Caco-2 (cell line): ENCODE measurements at regions of chr16 and their contacts with region 1.

Region 1: GRCh38 chr16:180938-181667 is 844 bp downstream of the HBQ1 start:
- DNase-seq: peak; percentile 86 to 92
- H3K4me3 ChIP-seq: peak overlapping the region; percentile 83
- H3K4me3 Mint-ChIP-seq: peak overlapping the region; percentile 64
- H3K27ac Mint-ChIP-seq: no peak overlapping the region
- H3K4me1 ChIP-seq: peaks cover 5% of the 10 kb centered on the region
- H3K4me1 Mint-ChIP-seq: no peaks in the 10 kb centered on the region
- H3K27me3 ChIP-seq: no peaks in the 10 kb centered on the region
- H3K27me3 Mint-ChIP-seq: no peaks in the 10 kb centered on the region
- CTCF ChIP-seq: peak; percentile 91 to 92

Region 2: GRCh38 chr16:117379-118365 is 63.4 kb before region 1 on chr16:
- CTCF ChIA-PET with region 1: no interaction called
- POLR2A ChIA-PET with region 1: no interaction called
- intact Hi-C with region 1: loop called (anchors 2 kb)
- DNase-seq: peak in 1 of 2 experiments; percentile 62
- H3K4me3 ChIP-seq: no peak overlapping the region
- H3K4me3 Mint-ChIP-seq: no peak overlapping the region
- H3K27ac Mint-ChIP-seq: no peak overlapping the region
- H3K4me1 ChIP-seq: 0 out of 2 replicates have a peak, but pooled peaks cover 6% of the 10 kb centered on the region
- H3K4me1 Mint-ChIP-seq: no peaks in the 10 kb centered on the region
- H3K27me3 ChIP-seq: no peaks in the 10 kb centered on the region
- H3K27me3 Mint-ChIP-seq: no peaks in the 10 kb centered on the region
- CTCF ChIP-seq: peak; percentile 57 to 64